A549 (cell line): ENCODE measurements at regions of chr1 and their contacts with region 1.

Region 1: DNA sequence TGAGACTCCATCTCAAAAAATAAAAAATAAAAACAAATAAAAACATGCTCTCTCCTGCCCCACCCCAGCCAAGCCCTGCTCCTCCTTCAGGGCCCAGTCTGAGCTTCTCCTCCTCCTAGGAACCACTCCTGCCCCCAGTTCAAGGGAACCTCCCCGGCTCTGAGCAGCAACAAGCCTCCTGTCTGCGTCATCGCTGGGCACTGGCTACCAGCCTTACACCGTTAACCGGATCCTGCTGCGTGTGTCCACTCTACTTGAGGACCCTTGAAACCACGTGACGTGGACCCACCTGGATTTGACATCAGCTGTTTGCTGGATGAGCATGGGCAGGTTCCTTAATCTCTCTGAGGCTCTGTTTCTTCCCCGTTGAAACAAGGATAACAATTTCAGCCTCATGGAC is 1.6 kb upstream of the TAS1R2 start:
- DNase-seq: no peak
- ATAC-seq: no peak
- H3K4me3 ChIP-seq: no peak overlapping the region
- H3K27ac ChIP-seq: no peak overlapping the region
- H3K4me1 ChIP-seq: no peaks in the 10 kb centered on the region
- CTCF ChIP-seq: no peak
- EP300 ChIP-seq: no peak
- POLR2A ChIP-seq: no peak
- RAD21 ChIP-seq: no peak

Region 2: GRCh38 chr1:18875107-18875795 is 14.2 kb after region 1 on chr1:
- CTCF ChIA-PET with region 1: interaction called, 10 read pairs
- POLR2A ChIA-PET with region 1: no interaction called
- DNase-seq: peak; percentile 81 to 87
- ATAC-seq: peak; percentile 87 to 97
- H3K4me3 ChIP-seq: no peak overlapping the region
- H3K27ac ChIP-seq: no peak overlapping the region
- H3K4me1 ChIP-seq: no peaks in the 10 kb centered on the region
- CTCF ChIP-seq: peak; percentile 65
- EP300 ChIP-seq: no peak
- POLR2A ChIP-seq: no peak
- RAD21 ChIP-seq: peak; percentile 75